ENCODE measurements at regions of chr4 and their contacts with region 1.

Region 1: DNA sequence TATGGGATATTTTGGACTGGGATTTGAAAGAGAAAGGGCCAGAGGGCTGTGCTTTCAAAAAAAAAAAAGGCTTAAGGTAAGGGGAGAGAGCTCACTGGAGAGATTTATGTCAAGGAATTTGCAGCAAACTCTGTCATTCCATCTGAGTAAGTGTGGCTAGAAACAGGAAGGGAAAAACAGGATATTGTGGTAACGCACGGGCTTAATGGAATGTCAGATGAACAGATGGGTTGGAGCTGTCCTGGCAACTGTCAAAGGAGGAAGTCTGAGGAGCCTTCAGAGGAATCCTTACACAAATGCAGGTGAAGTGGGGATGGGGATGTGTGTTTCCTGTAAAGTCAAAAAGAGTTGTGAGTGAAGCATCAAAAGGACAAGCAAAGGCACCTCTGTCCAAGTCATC is 15.1 kb upstream of the NKX3-2 start:
- DNase-seq: peak; percentile 78
- H3K4me3 ChIP-seq: no peak overlapping the region
- H3K27ac ChIP-seq: peak overlapping the region; percentile 51
- H3K4me1 ChIP-seq: peaks cover 22% of the 10 kb centered on the region
- H3K27me3 ChIP-seq: no peaks in the 10 kb centered on the region
- CTCF ChIP-seq: no peak

Region 2: DNA sequence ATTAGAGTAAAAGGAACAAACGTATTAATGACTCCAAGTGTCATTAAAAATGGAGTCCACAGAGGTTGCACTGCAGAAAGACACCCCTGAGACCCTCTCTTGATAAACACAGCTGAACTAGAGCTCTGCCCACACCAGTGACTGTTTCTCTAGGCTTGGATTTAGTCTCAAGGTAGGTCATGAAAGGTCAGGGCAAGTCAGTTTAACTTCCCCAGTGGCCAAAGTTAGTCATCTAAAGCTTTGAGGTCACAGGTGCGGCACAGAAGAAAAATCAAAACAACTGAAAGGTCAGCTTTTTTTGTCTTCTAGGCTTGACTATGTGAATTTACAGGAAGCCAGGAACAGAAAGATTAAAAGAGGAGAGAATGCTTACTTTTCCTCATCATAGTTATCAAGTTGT is 824.8 kb before region 1 on chr4:
- CTCF ChIA-PET with region 1: no interaction called
- dilution Hi-C with region 1: no loop called
- in situ Hi-C with region 1: loop called in 1 of 2 experiments (anchors 10 kb)
- intact Hi-C with region 1: no loop called
- DNase-seq: no peak
- H3K4me3 ChIP-seq: no peak overlapping the region
- H3K27ac ChIP-seq: no peak overlapping the region
- H3K4me1 ChIP-seq: no peaks in the 10 kb centered on the region
- H3K27me3 ChIP-seq: no peaks in the 10 kb centered on the region
- CTCF ChIP-seq: no peak

Measured in mammary epithelial cell (primary cell).